Activated naive CD4-positive, alpha-beta T cell treated with anti-CD3 and anti-CD28 coated beads, Interleukin-2, amount 10 ng/mL, durations not matched to agents 7 days and 5 days (primary cell): ENCODE measurements at regions of chr16 and their contacts with region 1.

Region 1: DNA sequence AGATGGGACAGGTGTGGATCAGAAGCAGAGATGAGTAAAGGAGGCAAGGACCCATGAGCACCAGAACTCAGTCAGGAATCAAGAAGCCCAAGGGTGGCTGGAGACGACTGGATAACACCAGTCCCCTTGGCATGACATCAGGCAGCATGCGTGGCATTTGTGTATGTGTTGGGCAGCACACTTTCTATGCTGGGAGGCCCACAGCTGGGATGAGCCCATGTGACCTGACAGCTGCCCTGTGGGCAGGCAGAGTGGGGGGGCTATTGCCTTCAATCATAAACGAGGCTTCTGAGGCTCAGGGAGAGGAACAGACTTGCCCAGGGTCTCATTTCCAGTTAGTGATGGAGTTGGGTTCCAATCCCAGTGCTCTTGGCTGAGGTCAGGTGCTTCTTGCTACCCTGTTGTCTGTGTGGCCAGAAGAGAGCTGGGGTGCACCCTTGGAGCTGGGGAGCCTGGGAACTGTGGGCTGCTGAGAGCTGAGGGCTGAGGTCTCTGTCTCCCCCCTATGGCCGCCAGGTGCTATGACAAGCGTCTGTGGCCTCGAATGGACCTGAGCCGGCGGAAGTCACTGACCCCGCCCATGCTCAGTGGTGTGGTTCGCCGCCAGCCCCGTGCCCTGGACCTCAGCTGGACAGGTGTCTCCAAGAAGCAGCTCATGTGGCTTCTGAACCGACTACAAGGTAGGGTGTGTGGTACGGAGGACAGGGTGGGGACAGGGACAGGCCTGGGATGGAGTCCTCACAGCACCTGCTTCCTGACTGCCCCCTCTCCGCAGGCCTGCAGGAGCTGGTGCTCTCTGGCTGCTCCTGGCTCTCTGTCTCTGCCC is 7.1 kb upstream of the ORAI3 start:
- DNase-seq: peak; percentile 81
- H3K4me3 Mint-ChIP-seq: peak overlapping the region; percentile 54
- H3K27ac Mint-ChIP-seq: peak overlapping the region; percentile 73
- H3K4me1 Mint-ChIP-seq: peaks cover 27% of the 10 kb centered on the region
- H3K27me3 Mint-ChIP-seq: no peaks in the 10 kb centered on the region

Region 2: GRCh38 chr16:30927789-30928378 is 13.9 kb before region 1 on chr16:
- CTCF ChIA-PET with region 1: interaction called, 14 read pairs
- DNase-seq: peak; percentile 46
- H3K4me3 Mint-ChIP-seq: no peak overlapping the region
- H3K27ac Mint-ChIP-seq: no peak overlapping the region
- H3K4me1 Mint-ChIP-seq: peaks cover 26% of the 10 kb centered on the region
- H3K27me3 Mint-ChIP-seq: no peaks in the 10 kb centered on the region

Region 3: DNA sequence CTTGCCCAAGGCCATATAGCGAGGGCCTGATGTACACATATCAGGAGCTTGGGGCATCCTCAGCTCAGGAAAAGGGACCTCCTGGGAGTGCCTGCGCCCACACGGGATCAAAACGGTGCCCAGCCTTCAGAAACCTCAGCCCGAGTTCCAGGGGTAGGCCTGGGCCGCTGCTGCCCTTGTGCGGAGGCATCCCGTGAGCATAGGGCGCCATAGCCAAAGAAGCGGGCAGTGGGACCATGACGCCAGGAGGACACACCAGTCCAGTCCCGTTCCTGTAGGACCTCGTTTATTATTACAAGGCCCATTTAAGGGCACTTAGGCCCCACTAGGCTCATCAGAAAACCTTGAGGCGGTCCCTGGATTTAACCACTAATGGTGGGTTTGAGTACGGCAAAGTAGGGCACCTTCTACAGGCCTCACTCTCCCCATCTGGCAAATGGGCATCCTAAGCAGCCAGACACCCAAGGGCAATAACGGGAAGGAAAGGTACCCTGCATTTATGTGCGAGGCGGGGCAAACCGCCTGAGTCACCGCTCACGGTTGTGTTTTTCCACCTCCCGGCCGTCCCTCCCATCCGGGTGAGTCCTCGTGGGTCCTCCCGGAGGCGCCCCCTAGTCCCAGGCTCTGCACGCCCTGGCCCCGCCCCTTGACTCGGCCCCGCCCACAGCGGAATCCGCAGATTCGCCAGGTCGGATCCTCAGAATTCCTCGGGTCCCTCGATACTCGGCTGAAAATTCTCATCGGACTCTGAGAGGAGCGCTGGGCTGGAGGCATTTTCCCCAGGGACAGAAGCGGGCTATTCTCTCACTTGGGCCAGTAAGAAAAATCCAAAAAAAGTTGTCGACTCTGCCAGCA is 15.0 kb after region 1 on chr16:
- CTCF ChIA-PET with region 1: interaction called, 31 read pairs
- DNase-seq: peak; percentile 90
- H3K4me3 Mint-ChIP-seq: peak overlapping the region; percentile 85
- H3K27ac Mint-ChIP-seq: peak overlapping the region; percentile 98
- H3K4me1 Mint-ChIP-seq: peaks cover 44% of the 10 kb centered on the region
- H3K27me3 Mint-ChIP-seq: no peaks in the 10 kb centered on the region